ENCODE measurements at regions of chrX and their contacts with region 1.

Region 1: DNA sequence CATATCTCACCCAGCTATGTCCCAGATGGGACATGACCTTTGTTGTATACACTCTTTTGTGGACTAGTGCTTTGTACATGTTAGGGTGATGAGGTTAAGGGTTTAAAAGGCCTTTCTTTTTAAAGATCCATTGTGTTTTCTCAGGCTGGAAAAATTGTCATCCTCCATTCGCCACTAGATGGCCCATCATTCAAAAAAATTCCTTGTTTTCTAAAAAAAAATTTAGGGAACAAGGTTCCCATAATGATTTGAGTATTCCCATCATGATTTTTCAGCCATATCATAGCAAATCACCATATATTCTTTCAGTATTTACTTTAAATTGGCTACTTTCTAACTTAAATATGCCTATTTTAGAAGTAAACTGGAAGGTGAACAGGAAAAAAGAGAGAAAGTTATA is 91.9 kb upstream of the TMEM164 start:
- DNase-seq: no peak
- H3K4me3 ChIP-seq: no peak overlapping the region
- H3K27ac ChIP-seq: no peak overlapping the region
- H3K4me1 ChIP-seq: no peaks in the 10 kb centered on the region
- H3K27me3 ChIP-seq: peaks cover 3% of the 10 kb centered on the region
- CTCF ChIP-seq: peak; percentile 45 to 61

Region 2: GRCh38 chrX:110002300-110003166 is 91.5 kb after region 1 on chrX and contains the start of gene TMEM164:
- CTCF ChIA-PET with region 1: no interaction called
- dilution Hi-C with region 1: no loop called
- in situ Hi-C with region 1: no loop called
- intact Hi-C with region 1: loop called (anchors 10 kb)
- DNase-seq: peak; percentile 77
- H3K4me3 ChIP-seq: peak within 1 kb of the TSS; percentile 53 to 76 (median 64)
- H3K27ac ChIP-seq: peak within 1 kb of the TSS; percentile 35
- H3K4me1 ChIP-seq: peaks cover 20% of the 10 kb centered on the region
- H3K27me3 ChIP-seq: peaks cover 1% of the 10 kb centered on the region
- CTCF ChIP-seq: no peak
- total RNA-seq, gene TMEM164: 8.3 to 19.1 TPM

Region 3: GRCh38 chrX:110133735-110134370 is 222.8 kb after region 1 on chrX:
- CTCF ChIA-PET with region 1: no interaction called
- dilution Hi-C with region 1: no loop called
- in situ Hi-C with region 1: no loop called
- intact Hi-C with region 1: no loop called
- DNase-seq: no peak
- H3K4me3 ChIP-seq: no peak overlapping the region
- H3K27ac ChIP-seq: no peak overlapping the region
- H3K4me1 ChIP-seq: no peaks in the 10 kb centered on the region
- H3K27me3 ChIP-seq: no peaks in the 10 kb centered on the region
- CTCF ChIP-seq: no peak

Region 4: DNA sequence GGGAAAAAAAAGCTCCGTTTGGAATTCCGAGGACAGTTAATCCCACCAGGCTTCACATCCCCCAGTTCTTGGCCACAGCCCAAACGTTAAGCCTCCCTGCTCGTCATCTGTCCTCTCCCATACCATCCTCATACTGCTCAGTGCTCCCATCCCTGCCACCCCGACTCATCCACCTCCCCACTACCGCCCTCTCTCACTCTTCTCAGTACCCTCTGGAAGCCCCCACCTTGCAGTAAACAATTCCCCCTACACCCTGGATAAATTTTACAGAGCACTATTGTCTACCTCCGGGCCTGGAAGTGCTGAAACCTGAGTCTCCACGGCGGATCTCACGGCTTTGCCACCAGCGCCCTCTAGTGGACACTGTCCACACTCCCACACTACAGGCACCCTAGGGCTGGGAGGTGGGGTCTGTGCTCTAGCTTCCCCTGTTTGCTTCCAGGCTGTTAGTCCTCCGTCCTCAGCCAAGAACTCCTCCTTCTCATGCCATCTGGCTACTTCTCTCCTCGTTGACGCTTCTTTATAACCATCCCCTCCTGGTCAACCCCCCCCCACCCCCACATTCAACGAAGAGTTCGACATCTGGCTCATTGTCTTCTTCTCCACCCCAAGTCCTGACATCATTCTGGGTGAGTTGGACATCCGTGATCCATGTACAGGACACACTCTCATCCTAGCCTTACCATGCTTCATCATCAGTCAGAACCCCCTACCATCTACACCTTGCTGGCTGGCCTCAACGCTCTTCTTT is 502.1 kb after region 1 on chrX:
- CTCF ChIA-PET with region 1: no interaction called
- dilution Hi-C with region 1: no loop called
- in situ Hi-C with region 1: loop called (anchors 25 kb)
- intact Hi-C with region 1: loop called (anchors 5 kb)
- DNase-seq: peak; percentile 48
- H3K4me3 ChIP-seq: no peak overlapping the region
- H3K27ac ChIP-seq: no peak overlapping the region
- H3K4me1 ChIP-seq: peaks cover 35% of the 10 kb centered on the region
- H3K27me3 ChIP-seq: no peaks in the 10 kb centered on the region
- CTCF ChIP-seq: peak; percentile 79 to 93

Measured in mammary epithelial cell (primary cell).